Activated CD4-positive, alpha-beta memory T cell treated with anti-CD3 and anti-CD28 coated beads, Interleukin-2, amount 10 ng/mL, durations not matched to agents 7 days and 5 days (primary cell): ENCODE measurements at regions of chr11 and their contacts with region 1.

Region 1: DNA sequence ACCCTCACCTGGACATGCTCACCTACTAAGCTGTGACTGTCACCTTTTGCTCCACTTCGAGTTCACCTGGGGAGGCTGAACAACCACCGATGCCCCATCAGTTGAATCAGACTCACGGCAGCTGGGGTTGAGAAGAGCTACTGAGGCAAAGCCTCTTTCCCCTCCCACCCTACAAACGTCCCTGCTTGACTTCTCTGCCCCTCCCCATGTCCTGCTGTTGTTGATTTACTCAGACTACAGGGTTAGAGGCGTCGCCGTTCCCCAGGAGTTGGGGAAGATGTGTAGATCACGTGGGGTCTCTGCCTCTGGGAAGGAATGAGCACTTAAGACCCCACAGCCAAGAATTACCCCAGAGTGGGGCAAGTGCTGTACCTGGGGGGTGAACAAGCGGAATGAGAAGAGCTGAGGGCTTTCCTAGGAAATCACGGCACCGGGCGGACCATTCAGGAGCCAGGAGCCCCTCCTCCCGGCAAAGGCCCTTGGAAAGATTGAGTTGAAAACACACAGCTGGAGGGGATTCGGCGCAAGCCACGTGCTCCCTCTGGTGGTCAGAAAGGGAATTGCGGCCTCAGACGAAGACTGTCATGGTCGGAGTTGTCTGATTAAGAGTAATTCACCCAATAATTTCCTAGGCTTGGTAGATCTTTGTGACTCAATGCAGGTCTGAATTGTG is 7.0 kb downstream of the FXYD2 start:
- DNase-seq: peak; percentile 89
- H3K4me3 Mint-ChIP-seq: no peak overlapping the region
- H3K27ac Mint-ChIP-seq: peak overlapping the region; percentile 73
- H3K4me1 Mint-ChIP-seq: peaks cover 65% of the 10 kb centered on the region
- H3K27me3 Mint-ChIP-seq: no peaks in the 10 kb centered on the region

Region 2: DNA sequence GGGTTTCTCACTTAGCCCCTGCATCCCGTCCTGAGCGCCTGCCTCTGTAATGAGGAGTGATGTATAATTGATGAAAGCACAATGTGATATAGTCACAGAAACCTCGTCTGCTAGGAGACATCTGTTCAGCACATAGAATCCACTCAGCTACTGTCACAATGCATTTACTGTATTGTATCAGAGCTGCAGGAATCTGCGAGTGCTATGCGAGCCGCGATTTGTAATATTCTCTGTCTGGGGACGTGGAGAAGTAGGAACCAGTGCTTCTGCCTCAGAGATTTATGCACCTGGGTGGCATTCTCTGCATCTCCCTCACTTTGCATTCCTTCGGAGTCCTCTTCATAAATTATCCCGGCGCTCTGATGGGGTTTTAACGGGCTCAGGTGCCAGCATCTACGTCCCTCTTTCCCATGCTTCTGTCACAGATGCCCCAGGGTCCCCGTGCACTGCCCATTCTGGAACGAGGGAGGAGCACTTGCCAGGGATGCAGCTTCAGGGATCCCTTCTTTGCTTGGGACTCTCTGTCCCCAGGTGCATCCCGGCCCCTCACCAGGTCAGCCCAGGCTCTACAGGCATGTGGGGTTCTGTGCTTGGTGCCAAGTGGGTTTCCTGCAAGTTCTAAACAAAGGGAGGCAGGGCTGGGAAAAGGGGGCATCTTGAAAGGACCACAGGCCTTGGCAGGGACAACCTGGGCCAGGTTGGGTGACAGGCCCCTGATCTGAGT is 226.0 kb before region 1 on chr11:
- CTCF ChIA-PET with region 1: no interaction called
- POLR2A ChIA-PET with region 1: no interaction called
- DNase-seq: no peak
- H3K4me3 Mint-ChIP-seq: no peak overlapping the region
- H3K27ac Mint-ChIP-seq: no peak overlapping the region
- H3K4me1 Mint-ChIP-seq: peaks cover 4% of the 10 kb centered on the region
- H3K27me3 Mint-ChIP-seq: peaks cover 10% of the 10 kb centered on the region

Region 3: DNA sequence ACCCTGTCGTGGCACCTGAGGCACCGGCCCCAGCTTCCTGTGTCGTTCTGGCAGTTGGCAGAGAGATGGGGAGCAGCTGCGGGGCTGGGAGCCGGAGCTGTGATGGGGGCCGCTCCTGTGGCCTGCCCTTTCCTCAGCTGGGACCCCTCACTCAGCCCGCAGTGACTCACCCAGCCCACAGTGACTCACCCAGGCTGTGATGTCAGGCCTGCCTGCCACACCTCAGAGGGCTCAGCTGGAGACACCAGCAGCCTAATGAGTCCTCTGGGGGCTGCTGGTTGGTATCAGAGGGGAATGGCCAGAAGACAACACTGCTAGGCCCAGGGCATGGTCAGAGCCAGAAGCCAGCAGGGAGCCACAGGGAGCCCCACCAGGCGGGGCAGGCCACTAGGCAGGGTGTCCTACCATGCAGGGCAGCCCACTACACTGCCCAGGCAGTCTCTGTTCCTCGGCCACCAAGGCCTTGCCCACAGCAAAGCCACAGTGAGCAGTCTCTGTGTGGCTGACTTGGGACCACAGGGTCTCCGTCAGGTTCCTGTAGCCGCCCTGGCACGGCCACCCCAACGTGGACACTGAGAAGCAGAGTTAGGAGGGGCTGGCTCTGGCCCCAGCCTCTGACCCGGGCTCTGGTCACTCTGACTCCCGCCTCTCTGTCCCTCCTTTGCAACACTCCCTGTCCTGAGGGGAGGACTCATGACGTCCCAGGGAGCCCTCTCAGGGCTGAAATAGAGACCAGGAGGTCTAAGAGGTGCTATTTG is 11.3 kb after region 1 on chr11:
- CTCF ChIA-PET with region 1: interaction called, 19 read pairs
- POLR2A ChIA-PET with region 1: interaction called, 15 read pairs
- DNase-seq: peak; percentile 85
- H3K4me3 Mint-ChIP-seq: no peak overlapping the region
- H3K27ac Mint-ChIP-seq: peak overlapping the region; percentile 74
- H3K4me1 Mint-ChIP-seq: peaks cover 53% of the 10 kb centered on the region
- H3K27me3 Mint-ChIP-seq: no peaks in the 10 kb centered on the region

Region 4: DNA sequence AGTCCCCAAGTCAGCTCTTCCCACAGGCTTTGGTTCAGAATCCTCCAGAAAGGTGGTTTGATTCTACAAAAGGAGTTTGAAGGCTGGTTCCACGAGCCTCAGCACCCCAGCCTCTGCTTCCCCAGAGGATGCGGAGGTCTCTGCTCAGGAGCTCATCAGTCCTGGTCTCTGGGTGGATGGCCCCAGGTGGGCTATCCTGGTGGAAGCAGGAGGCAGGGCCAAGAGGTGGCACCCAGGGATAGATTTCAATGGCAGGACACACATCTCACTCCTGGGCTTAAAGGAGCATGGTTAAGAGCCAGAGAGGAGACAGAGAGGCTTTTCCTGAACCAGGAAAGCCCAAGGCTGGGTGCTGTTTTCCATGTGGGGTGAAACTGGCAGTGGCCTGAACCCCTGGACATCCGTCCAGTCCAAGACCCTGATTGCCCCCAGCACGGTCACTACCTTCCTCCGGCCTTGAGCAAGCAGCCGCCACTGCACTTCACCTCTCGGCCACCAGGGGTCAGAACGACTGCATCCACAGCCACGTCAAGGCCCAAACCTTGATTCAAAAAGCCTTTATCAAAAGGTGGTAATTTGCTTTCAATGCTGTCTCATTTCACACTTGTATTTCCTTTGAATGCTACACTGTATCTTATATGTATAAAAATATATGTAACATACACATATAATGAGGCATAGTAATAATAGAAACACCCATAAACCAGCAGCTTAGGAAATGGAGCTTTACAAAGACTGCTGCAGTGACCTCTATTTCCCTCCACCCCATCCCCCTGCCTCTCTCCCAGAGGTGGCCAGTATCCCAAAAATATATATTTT is 26.4 kb after region 1 on chr11:
- CTCF ChIA-PET with region 1: interaction called, 11 read pairs
- POLR2A ChIA-PET with region 1: no interaction called
- DNase-seq: peak; percentile 85
- H3K4me3 Mint-ChIP-seq: no peak overlapping the region
- H3K27ac Mint-ChIP-seq: no peak overlapping the region
- H3K4me1 Mint-ChIP-seq: peaks cover 1% of the 10 kb centered on the region
- H3K27me3 Mint-ChIP-seq: peaks cover 6% of the 10 kb centered on the region

Region 5: DNA sequence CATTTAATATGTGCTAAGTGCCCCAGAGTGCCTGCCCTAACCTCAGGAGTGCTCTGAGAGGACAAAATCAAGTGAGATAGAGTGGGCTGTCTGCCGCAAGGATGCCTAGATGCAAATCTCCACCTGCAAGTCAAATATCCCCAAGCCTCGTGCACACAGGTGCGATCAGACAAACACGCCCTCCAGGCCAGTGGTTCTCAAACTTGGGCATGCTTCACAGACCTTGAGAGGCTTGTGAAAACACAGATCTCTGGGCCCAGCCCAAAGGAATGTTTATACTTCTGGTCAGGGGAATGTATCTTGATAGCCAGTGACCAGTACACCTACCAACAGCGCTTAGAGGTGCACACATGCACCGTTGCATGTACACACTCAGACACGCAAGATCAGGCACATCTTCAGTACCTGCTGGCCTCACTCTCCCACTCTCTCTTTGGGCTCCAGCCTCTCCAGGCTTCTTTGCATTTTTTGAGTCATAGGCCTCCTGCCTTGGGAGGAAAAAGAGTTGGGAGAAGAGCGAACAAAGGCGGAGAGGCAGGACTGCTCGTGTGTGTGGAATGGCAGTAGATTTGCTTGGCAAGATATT is 70.6 kb after region 1 on chr11:
- CTCF ChIA-PET with region 1: no interaction called
- POLR2A ChIA-PET with region 1: no interaction called
- DNase-seq: no peak
- H3K4me3 Mint-ChIP-seq: no peak overlapping the region
- H3K27ac Mint-ChIP-seq: no peak overlapping the region
- H3K4me1 Mint-ChIP-seq: no peaks in the 10 kb centered on the region
- H3K27me3 Mint-ChIP-seq: peaks cover 23% of the 10 kb centered on the region